Ovary (tissue), 10 donors: ENCODE measurements at regions of chr13 and their contacts with region 1.

Region 1: GRCh38 chr13:100514788-100515409 is 73.7 kb downstream of the GGACT start:
- DNase-seq: peak; percentile 77 to 88 (median 85)
- H3K4me3 ChIP-seq: no peak overlapping the region
- H3K27ac ChIP-seq: no peak overlapping the region
- H3K4me1 ChIP-seq: no peaks in the 10 kb centered on the region
- H3K27me3 ChIP-seq: no peaks in the 10 kb centered on the region
- CTCF ChIP-seq: peak; percentile 49 to 73 (median 70)
- EP300 ChIP-seq: no peak
- POLR2A ChIP-seq: no peak

Region 2: GRCh38 chr13:99656092-99656745 is 858.7 kb before region 1 on chr13:
- intact Hi-C with region 1: loop called in 3 of 4 experiments (anchors 5 to 10 kb)
- DNase-seq: peak; percentile 69 to 81 (median 75)
- H3K4me3 ChIP-seq: no peak overlapping the region
- H3K27ac ChIP-seq: no peak overlapping the region
- H3K4me1 ChIP-seq: no peaks in the 10 kb centered on the region
- H3K27me3 ChIP-seq: no peaks in the 10 kb centered on the region
- CTCF ChIP-seq: peak; percentile 67 to 77 (median 72)
- EP300 ChIP-seq: no peak
- POLR2A ChIP-seq: no peak

Region 3: DNA sequence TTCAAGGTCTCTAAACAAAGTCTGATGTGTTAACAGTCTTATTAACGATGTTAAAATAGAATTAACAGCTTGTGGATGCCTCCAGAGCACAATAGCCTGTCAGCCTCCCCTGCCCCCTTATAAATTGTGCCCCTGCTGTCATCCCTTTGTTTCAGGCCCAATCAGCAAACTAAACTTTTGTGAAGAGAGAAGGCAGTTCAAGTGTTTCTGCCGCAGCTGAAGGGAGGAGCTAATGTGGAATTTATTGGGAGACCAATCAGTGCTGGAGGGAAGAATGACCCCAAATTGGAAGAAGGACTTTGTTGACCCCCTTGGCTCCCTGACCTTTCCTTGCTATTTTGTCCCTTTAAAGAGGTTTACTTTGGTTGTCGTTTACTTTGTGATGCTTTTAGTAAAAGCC is 853.1 kb before region 1 on chr13:
- intact Hi-C with region 1: loop called in 3 of 4 experiments (anchors 5 to 10 kb)
- DNase-seq: no peak
- H3K4me3 ChIP-seq: no peak overlapping the region
- H3K27ac ChIP-seq: no peak overlapping the region
- H3K4me1 ChIP-seq: peaks cover 2% of the 10 kb centered on the region
- H3K27me3 ChIP-seq: no peaks in the 10 kb centered on the region
- CTCF ChIP-seq: no peak
- EP300 ChIP-seq: no peak
- POLR2A ChIP-seq: no peak

Region 4: DNA sequence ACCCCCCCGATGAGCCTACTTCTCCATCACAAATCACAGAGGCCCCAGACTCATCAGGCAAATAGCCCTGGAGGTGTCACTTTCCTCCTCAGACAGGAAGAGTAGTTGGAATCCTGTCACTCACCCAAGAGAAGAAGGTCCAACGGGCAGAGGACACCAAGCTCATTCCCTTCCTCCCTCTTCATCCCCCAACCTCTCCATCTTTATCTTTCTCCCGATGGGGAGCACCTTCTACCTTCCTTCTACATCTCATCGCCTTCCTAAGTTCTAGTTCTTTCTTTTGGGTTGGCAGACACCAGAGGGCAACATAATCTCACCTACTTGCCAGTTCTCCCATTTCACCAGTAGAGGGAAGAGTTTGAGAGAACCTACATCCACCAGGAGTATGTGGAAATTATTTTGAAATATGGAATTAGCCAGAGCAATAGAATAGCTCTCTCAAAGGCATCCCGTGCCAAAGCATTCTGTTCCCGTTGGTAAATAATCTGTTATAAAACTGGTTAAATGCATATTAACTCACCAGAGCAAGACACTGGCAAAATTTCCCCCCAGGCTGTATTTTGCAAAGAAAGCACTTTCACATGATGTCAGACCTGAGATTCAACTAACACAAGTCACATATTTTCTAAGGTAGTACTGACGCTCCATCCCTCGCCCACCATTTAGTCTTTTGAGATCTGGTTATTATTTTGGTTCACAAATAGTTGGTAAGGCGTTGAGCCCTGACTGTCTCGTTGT is 598.4 kb before region 1 on chr13:
- intact Hi-C with region 1: loop called in 2 of 4 experiments (anchors 10 kb)
- DNase-seq: no peak
- H3K4me3 ChIP-seq: no peak overlapping the region
- H3K27ac ChIP-seq: no peak overlapping the region
- H3K4me1 ChIP-seq: no peaks in the 10 kb centered on the region
- H3K27me3 ChIP-seq: no peaks in the 10 kb centered on the region
- CTCF ChIP-seq: peak in 2 of 3 donors; percentile 28 to 46
- EP300 ChIP-seq: no peak
- POLR2A ChIP-seq: no peak

Region 5: GRCh38 chr13:100115693-100116254 is 399.1 kb before region 1 on chr13:
- intact Hi-C with region 1: loop called in 1 of 4 experiments (anchors 10 kb)
- DNase-seq: no peak
- H3K4me3 ChIP-seq: no peak overlapping the region
- H3K27ac ChIP-seq: no peak overlapping the region
- H3K4me1 ChIP-seq: no peaks in the 10 kb centered on the region
- H3K27me3 ChIP-seq: no peaks in the 10 kb centered on the region
- CTCF ChIP-seq: no peak
- EP300 ChIP-seq: no peak
- POLR2A ChIP-seq: no peak